ENCODE measurements at regions of chr2 and their contacts with region 1.

Region 1: GRCh38 chr2:65300761-65301711 is 73.4 kb downstream of the ACTR2 start:
- DNase-seq: peak; percentile 31 to 85 (median 81)
- ATAC-seq: peak; percentile 89
- H3K4me3 ChIP-seq: peak overlapping the region; percentile 53
- H3K4me3 Mint-ChIP-seq: peak overlapping the region; percentile 70 to 95 (median 86)
- H3K27ac ChIP-seq: peak overlapping the region; percentile 24
- H3K27ac Mint-ChIP-seq: peak overlapping the region; percentile 88 to 96 (median 94)
- H3K4me1 ChIP-seq: peaks cover 21 to 29% of the 10 kb centered on the region in 2 donors
- H3K4me1 Mint-ChIP-seq: peaks cover 24 to 57% (median 38%) of the 10 kb centered on the region in 7 donors
- H3K27me3 ChIP-seq: no peaks in the 10 kb centered on the region
- H3K27me3 Mint-ChIP-seq: peaks cover 0 to 41% (median 0%) of the 10 kb centered on the region in 5 donors

Region 2: DNA sequence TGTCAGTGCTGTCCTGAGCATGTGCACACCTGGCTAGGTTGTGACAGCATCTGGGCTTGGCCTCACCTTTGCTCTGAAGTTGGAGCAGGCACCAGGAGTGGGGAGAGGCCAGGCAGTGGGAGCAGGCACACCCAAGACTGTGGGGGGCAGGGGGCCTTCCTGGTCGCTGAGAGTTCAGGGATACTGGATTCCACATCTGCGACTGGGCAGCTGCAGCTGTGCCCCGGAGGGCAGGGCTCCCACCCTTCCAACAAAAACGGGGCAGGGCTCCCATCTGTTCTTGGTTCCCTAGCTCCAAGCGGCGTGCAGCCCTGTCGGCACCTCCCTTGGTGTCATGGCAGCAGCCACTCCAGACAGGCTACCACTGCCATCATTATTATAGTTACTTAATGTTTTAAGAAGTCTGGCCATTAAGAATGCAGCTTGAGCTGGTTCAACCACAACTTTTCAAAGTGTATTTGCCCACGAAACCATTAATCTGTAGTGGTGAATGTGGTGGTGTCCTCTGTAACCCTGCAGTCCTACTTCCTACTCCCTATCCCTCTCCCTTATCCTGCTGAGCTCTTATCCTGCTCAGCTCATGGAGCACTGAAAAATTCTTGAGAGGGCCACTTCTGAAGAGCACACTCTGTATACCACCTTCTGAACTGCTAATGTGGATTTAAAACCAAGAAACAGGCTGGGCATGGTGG is 123.1 kb before region 1 on chr2:
- CTCF ChIA-PET with region 1: no interaction called
- POLR2A ChIA-PET with region 1: no interaction called
- intact Hi-C with region 1: no loop called
- DNase-seq: no peak
- ATAC-seq: no peak
- H3K4me3 ChIP-seq: no peak overlapping the region
- H3K4me3 Mint-ChIP-seq: no peak overlapping the region
- H3K27ac ChIP-seq: no peak overlapping the region
- H3K27ac Mint-ChIP-seq: no peak overlapping the region
- H3K4me1 ChIP-seq: no peaks in the 10 kb centered on the region
- H3K4me1 Mint-ChIP-seq: no peaks in the 10 kb centered on the region
- H3K27me3 ChIP-seq: no peaks in the 10 kb centered on the region
- H3K27me3 Mint-ChIP-seq: peaks cover 0 to 22% (median 0%) of the 10 kb centered on the region in 5 donors

Region 3: DNA sequence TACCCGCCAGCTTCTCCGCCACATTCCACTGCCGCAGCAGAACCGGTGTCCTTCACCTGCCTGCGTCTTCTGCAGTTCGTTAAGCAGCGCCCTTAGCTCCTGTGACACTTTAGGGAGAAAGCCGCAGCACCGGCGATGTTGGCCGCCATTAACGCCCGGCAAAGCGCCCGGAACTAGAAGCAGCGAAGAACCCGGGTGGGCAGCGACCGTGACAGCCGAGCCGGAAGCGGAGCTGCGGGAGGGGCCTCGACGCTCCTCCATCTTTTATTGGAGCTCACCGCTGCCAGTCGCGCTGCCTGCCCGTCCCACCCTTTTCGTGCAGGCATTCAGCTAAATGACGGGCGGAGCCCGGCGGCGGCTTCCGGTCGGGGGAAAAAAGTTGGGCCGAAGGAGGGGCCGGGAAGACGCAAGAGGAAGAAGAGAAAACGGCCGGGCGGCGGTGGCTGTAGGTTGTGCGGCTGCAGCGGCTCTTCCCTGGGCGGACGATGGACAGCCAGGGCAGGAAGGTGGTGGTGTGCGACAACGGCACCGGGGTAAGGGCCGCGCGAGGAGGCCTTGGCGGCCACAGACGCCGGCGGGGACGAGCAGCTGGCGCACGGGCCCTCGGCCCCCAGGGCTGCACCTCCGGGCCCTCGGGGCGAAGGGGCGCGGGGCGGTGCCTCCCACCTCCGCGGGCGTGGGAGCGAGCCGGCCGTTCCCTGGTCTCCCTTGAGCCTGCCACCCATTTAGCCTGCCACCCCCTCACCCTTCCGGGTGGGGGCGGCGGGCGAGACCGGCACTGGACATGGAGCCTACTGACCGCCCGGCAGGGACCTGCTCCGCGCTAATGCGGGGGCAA is 73.4 kb before region 1 on chr2 and contains the start of gene ACTR2:
- CTCF ChIA-PET with region 1: interaction called, 3 read pairs
- POLR2A ChIA-PET with region 1: interaction called, 10 read pairs
- intact Hi-C with region 1: loop called (anchors 1 to 2 kb)
- DNase-seq: peak; percentile 86 to 94 (median 93)
- ATAC-seq: peak; percentile 97
- H3K4me3 ChIP-seq: peak within 1 kb of the TSS; percentile 99
- H3K4me3 Mint-ChIP-seq: peak within 1 kb of the TSS; percentile 95 to 100 (median 98)
- H3K27ac ChIP-seq: peak within 1 kb of the TSS; percentile 97
- H3K27ac Mint-ChIP-seq: peak within 1 kb of the TSS; percentile 97 to 99 (median 98)
- H3K4me1 ChIP-seq: peaks cover 25 to 38% of the 10 kb centered on the region in 2 donors
- H3K4me1 Mint-ChIP-seq: peaks cover 24 to 54% (median 44%) of the 10 kb centered on the region in 7 donors
- H3K27me3 ChIP-seq: no peaks in the 10 kb centered on the region
- H3K27me3 Mint-ChIP-seq: no peaks in the 10 kb centered on the region
- total RNA-seq, gene ACTR2: 180 to 435 (median 287) TPM

Region 4: DNA sequence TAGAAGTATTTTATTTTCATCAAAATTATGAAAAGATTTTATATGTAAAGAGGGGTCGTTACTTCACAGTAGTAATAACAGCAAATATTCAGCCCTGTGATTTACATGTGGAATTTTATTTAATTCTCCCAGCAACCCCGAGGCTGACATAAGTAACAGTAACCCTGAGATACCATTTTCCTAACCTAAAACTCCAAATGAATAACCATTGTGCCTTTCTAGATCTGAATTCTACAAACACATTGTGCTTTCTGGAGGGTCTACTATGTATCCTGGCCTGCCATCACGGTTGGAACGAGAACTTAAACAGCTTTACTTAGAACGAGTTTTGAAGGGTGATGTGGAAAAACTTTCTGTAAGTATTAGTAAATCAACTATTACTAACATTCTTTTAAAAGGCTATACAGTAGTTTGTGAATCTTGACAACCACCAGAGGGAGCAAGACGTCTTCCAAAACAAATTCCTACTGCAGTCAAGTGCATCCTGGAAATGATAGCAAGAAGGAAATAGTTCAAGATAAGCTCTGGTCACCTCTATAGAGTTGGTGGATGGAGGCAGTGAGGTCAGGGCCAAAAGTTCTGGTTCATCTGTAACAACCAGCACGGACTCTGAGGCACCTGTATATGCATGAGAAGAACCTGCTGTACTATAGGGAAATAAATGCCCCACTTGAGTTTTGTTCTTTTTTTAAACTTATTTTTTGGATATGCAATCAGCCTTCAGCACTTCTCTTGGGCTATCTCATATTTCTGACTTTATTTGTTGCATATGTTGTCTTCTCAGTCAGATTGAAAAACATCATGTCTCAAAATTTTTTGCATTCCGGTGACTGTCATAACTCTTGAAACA is 36.0 kb before region 1 on chr2:
- CTCF ChIA-PET with region 1: interaction called, 3 read pairs
- POLR2A ChIA-PET with region 1: no interaction called
- intact Hi-C with region 1: loop called in 1 of 2 experiments (anchors 2 kb)
- DNase-seq: peak in 6 of 9 donors; percentile 23 to 39 (median 34)
- ATAC-seq: no peak
- H3K4me3 ChIP-seq: no peak overlapping the region
- H3K4me3 Mint-ChIP-seq: no peak overlapping the region
- H3K27ac ChIP-seq: no peak overlapping the region
- H3K27ac Mint-ChIP-seq: peak overlapping the region in 5 of 9 donors; percentile 13 to 71 (median 57)
- H3K4me1 ChIP-seq: no peaks in the 10 kb centered on the region
- H3K4me1 Mint-ChIP-seq: peaks cover 8 to 28% (median 10%) of the 10 kb centered on the region in 7 donors
- H3K27me3 ChIP-seq: no peaks in the 10 kb centered on the region
- H3K27me3 Mint-ChIP-seq: no peaks in the 10 kb centered on the region

Region 5: DNA sequence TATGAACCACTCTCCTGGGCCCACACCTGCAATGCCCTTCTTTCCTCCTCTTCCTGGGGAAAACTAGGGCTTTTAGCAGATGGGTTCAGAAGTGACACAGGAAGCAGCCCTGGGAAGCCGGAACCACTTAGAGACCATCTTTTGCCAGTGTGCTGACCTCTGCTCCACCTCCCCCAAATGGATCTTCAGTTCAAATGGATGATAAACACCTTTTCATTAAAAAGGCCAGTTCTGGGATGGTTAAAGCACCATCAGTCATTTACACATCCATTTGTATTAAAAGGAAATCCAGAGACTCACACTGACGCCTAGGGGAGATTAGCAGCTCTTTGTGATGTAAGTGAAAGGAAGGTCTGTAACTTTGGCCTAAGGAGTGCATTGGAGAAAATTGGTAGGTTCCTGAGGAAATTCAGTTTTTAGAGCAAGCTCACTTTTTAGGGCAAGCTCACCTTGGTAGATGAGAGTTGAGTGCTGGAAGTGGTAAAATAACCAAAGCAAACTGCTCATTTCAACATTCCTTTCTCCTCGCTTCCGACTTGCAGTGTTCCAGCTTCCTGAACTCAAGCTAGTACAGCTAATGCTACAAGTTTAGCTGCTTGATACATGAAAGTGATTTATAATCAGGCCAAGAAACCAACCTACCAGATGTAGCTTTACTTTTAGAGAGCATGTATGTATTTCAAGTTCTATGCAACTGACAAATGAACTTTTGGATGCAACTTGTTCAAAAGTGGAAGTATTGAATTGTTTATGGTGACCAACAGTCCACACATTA is 25.7 kb before region 1 on chr2:
- CTCF ChIA-PET with region 1: no interaction called
- POLR2A ChIA-PET with region 1: no interaction called
- intact Hi-C with region 1: loop called in 1 of 2 experiments (anchors 1 kb)
- DNase-seq: no peak
- ATAC-seq: no peak
- H3K4me3 ChIP-seq: no peak overlapping the region
- H3K4me3 Mint-ChIP-seq: no peak overlapping the region
- H3K27ac ChIP-seq: no peak overlapping the region
- H3K27ac Mint-ChIP-seq: peak overlapping the region in 6 of 9 donors; percentile 15 to 74 (median 44)
- H3K4me1 ChIP-seq: peaks cover 11 to 12% of the 10 kb centered on the region in 2 donors
- H3K4me1 Mint-ChIP-seq: peaks cover 6 to 23% (median 15%) of the 10 kb centered on the region in 7 donors
- H3K27me3 ChIP-seq: no peaks in the 10 kb centered on the region
- H3K27me3 Mint-ChIP-seq: peaks cover 0 to 3% (median 0%) of the 10 kb centered on the region in 5 donors

Region 6: GRCh38 chr2:65357095-65357958 is 56.3 kb after region 1 on chr2:
- CTCF ChIA-PET with region 1: no interaction called
- POLR2A ChIA-PET with region 1: no interaction called
- intact Hi-C with region 1: loop called in 1 of 2 experiments (anchors 5 kb)
- DNase-seq: no peak
- ATAC-seq: no peak
- H3K4me3 ChIP-seq: no peak overlapping the region
- H3K4me3 Mint-ChIP-seq: peak overlapping the region in 1 of 10 donors; percentile 26
- H3K27ac ChIP-seq: no peak overlapping the region
- H3K27ac Mint-ChIP-seq: peak overlapping the region in 2 of 9 donors; percentile 27 to 43
- H3K4me1 ChIP-seq: no peaks in the 10 kb centered on the region
- H3K4me1 Mint-ChIP-seq: peaks cover 0 to 60% (median 0%) of the 10 kb centered on the region in 7 donors
- H3K27me3 ChIP-seq: no peaks in the 10 kb centered on the region
- H3K27me3 Mint-ChIP-seq: peaks cover 0 to 10% (median 3%) of the 10 kb centered on the region in 5 donors

Region 7: DNA sequence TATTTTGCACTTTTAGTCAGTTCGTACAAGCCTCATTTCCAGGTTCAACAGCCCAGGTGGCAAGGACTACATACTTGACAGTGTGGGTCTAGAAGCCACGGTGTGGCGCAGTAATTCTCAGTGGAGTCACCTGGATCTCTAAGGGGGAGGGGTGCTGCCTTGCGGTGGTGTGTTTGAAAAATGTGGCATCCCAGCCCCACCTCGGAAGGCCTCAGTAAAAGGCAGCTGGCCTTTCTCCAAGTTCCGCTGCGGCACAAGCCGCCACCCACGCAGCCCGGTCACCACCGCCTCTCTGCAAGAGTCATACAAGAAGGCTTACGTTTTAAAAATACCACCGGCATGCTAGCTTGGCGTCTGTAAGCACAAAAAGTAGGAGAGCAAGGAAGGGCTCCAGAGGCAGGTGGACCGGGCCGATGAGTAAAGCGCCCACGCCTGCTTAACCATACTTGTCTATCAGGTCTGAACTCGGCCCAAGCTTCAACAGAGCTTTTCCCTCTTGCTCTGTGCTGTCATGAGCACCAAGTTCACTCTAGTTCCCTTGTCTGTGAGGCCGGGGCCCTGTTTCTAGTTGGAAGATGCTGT is 81.8 kb after region 1 on chr2:
- CTCF ChIA-PET with region 1: no interaction called
- POLR2A ChIA-PET with region 1: no interaction called
- intact Hi-C with region 1: loop called (anchors 2 to 5 kb)
- DNase-seq: peak; percentile 31 to 84 (median 67)
- ATAC-seq: peak; percentile 87
- H3K4me3 ChIP-seq: peak overlapping the region; percentile 11
- H3K4me3 Mint-ChIP-seq: peak overlapping the region; percentile 50 to 83 (median 78)
- H3K27ac ChIP-seq: peak overlapping the region; percentile 41
- H3K27ac Mint-ChIP-seq: peak overlapping the region; percentile 26 to 91 (median 57)
- H3K4me1 ChIP-seq: peaks cover 0 to 23% of the 10 kb centered on the region in 2 donors
- H3K4me1 Mint-ChIP-seq: peaks cover 18 to 41% (median 26%) of the 10 kb centered on the region in 7 donors
- H3K27me3 ChIP-seq: no peaks in the 10 kb centered on the region
- H3K27me3 Mint-ChIP-seq: no peaks in the 10 kb centered on the region

Measured in naive thymus-derived CD4-positive, alpha-beta T cell (primary cell).